Esophagus muscularis mucosa (tissue), 4 donors: ENCODE measurements at regions of chr5 and their contacts with region 1.

Region 1: GRCh38 chr5:147509710-147510651 is at the start of gene DPYSL3:
- DNase-seq: peak; percentile 92
- H3K4me3 ChIP-seq: peak within 1 kb of the TSS; percentile 67 to 94 (median 86)
- H3K27ac ChIP-seq: peak within 1 kb of the TSS; percentile 90 to 98 (median 92)
- H3K4me1 ChIP-seq: peaks cover 4 to 34% (median 32%) of the 10 kb centered on the region in 4 donors
- H3K27me3 ChIP-seq: no peaks in the 10 kb centered on the region
- CTCF ChIP-seq: peak; percentile 33 to 58 (median 34)
- EP300 ChIP-seq: no peak
- POLR2A ChIP-seq: no peak
- total RNA-seq, gene DPYSL3: 295 to 449 (median 378) TPM

Region 2: GRCh38 chr5:147303251-147303650 is 206.7 kb before region 1 on chr5:
- intact Hi-C with region 1: no loop called
- DNase-seq: no peak
- H3K4me3 ChIP-seq: no peak overlapping the region
- H3K27ac ChIP-seq: no peak overlapping the region
- H3K4me1 ChIP-seq: peaks cover 0 to 13% (median 7%) of the 10 kb centered on the region in 4 donors
- H3K27me3 ChIP-seq: no peaks in the 10 kb centered on the region
- CTCF ChIP-seq: no peak
- EP300 ChIP-seq: no peak
- POLR2A ChIP-seq: no peak

Region 3: DNA sequence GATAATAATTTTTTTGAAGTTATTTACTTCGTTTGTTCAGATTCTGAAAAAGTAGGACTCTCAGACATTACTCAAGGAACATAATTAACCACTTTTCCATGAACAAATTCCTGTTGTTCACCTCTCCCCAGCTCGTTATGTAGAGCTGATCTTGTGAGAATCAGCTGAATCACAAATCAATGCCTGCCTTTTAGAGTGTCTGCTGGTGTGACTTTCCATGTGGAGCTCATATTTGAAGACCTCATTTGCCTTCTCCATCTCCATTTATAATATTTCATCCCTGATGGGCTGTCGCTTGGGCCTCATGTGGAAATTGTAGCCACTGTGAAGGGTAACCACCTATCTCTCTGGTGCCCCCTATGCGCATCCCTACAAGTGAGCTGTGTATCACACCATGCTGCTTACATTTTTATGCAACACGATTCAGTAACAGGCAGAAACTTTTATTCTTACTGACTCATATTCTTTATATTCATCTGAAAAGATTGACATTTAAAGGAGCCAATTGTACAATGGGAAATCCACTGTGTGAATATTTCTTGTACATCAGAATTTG is 163.9 kb before region 1 on chr5:
- intact Hi-C with region 1: no loop called
- DNase-seq: no peak
- H3K4me3 ChIP-seq: no peak overlapping the region
- H3K27ac ChIP-seq: no peak overlapping the region
- H3K4me1 ChIP-seq: no peaks in the 10 kb centered on the region
- H3K27me3 ChIP-seq: peaks cover 0 to 4% (median 0%) of the 10 kb centered on the region in 4 donors
- CTCF ChIP-seq: no peak
- EP300 ChIP-seq: no peak
- POLR2A ChIP-seq: no peak

Region 4: DNA sequence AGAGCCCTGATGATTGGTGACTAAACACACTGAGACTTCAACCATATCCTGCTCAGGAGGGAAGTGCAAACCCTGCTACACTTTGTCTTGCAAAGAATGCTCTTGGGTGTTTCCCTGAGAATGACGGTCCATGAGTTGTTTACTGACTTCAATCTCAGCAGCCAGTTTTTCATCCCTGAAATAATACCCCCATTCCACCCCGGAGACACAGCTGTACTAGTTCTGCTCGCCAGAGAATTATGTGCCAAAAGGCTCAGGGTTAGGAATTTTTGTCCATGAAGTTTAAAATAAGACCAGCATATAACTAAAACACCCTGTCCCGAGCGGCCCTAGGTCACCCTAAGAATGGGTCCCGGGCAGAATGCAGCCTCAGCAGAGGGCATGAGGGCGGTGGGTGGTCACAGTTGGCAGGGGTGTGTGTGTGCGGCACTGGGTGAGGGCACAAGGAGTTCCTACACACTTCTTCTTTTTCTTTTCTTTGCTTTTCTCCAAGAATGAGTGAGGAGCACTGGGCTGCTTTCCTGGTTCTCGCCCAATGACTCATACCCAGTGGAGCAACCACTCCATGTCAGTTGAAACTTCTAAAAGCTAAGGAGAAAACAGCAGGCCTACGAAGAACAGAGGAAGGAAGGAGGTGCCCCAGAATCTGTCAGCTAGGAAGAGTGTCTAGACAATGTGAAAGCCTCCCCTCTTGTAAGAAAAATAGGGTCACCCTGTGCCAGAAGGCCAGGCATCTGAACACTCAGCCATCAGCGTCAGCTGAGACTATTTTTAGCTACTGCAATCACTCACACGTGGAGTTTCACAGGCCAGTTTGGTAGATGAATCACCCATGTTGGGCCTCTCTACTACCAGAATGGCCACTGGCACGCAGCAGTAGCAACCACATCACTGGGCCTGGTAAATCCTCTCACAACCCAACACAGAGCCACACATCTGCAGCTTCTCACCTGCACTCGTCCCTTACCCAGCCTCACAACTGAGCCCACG is 106.0 kb before region 1 on chr5:
- intact Hi-C with region 1: loop called (anchors 5 kb)
- DNase-seq: peak; percentile 93
- H3K4me3 ChIP-seq: peak overlapping the region in 2 of 4 donors; percentile 12 to 24
- H3K27ac ChIP-seq: peak overlapping the region; percentile 85 to 96 (median 92)
- H3K4me1 ChIP-seq: peaks cover 46 to 79% (median 65%) of the 10 kb centered on the region in 4 donors
- H3K27me3 ChIP-seq: no peaks in the 10 kb centered on the region
- CTCF ChIP-seq: no peak
- EP300 ChIP-seq: peak; percentile 67
- POLR2A ChIP-seq: no peak

Region 5: DNA sequence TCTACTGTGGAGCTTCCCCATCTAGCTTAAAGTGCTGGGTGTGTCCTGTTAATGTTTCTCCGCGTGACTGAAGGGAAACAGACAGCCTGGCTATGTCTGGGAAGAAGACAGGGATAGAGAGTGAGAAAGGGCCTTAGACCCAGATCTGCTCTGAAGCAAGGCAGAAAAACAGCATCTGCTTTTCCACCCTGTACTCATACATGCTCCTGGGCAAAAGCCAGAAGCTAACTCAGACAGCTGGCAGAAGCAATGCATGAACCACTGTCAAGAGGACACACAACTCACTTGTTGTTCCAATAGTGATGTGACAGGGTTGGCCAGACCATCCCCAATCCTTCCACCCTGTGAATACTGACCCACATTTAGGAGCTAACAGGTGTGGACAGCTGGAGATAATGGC is 63.5 kb before region 1 on chr5:
- intact Hi-C with region 1: no loop called
- DNase-seq: no peak
- H3K4me3 ChIP-seq: no peak overlapping the region
- H3K27ac ChIP-seq: peak overlapping the region; percentile 95 to 99 (median 98)
- H3K4me1 ChIP-seq: peaks cover 16 to 96% (median 93%) of the 10 kb centered on the region in 4 donors
- H3K27me3 ChIP-seq: no peaks in the 10 kb centered on the region
- CTCF ChIP-seq: no peak
- EP300 ChIP-seq: peak; percentile 31
- POLR2A ChIP-seq: no peak

Region 6: DNA sequence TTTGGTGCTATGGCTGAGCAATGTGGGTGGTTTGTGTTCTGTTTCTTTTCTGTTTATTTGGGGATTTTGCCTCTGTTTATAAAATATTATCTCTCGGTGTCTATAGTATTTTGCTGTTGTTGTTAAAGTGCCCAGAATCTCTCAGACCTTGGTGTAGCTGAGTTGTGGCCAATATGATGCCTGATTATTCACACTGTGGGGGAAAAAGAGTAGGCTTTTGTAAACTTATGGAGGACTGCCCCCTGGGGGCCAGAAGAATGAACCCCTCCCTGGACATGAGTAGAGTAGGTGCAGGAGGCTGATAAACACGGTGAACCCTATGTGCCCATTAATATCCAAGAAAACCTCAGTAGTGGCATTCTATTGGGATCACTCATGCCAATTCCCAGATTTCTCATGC is 48.8 kb after region 1 on chr5:
- intact Hi-C with region 1: loop called (anchors 2 kb)
- DNase-seq: no peak
- H3K4me3 ChIP-seq: no peak overlapping the region
- H3K27ac ChIP-seq: peak overlapping the region; percentile 62 to 87 (median 65)
- H3K4me1 ChIP-seq: peaks cover 12 to 41% (median 37%) of the 10 kb centered on the region in 4 donors
- H3K27me3 ChIP-seq: no peaks in the 10 kb centered on the region
- CTCF ChIP-seq: peak; percentile 79 to 82 (median 82)
- EP300 ChIP-seq: no peak
- POLR2A ChIP-seq: no peak